Prostate gland (tissue), 2 donors: ENCODE measurements at regions of chr11 and their contacts with region 1.

Region 1: DNA sequence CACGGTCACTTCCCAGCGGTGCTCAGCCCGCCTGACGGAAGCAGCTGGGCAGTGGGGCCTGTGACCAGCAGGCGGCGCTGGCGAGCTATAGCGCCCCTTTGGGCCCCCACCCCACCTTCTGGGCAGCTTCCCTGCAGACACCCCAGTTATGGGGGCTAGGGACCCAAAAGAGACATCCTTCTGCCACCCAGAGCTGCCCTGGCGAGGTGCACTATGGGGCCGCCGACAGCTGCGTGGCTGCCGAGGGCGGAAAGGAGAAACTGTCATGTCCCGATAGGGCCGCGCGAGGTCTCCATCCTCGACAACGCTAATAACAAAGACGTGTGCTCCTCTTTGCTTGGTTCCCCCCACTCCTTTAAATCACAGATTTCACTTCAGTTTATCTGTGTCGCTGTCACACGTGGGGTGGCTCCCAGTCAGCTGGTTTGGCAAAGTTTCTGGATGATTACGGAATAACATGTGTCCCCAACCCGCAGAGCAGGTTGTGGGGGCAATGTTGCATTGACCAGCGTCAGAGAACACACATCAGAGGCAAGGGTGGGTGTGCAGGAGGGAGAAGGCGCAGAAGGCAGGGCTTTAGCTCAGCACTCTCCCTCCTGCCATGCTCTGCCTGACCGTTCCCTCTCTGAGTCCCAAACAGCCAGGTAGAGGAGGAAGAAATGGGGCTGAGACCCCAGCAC is 674 bp upstream of the MYO7A start:
- DNase-seq: no peak
- H3K4me3 ChIP-seq: peak overlapping the region; percentile 11 to 21
- H3K27ac ChIP-seq: no peak overlapping the region
- H3K4me1 ChIP-seq: no peaks in the 10 kb centered on the region
- H3K27me3 ChIP-seq: no peaks in the 10 kb centered on the region
- CTCF ChIP-seq: peak; percentile 78 to 98 (median 92)
- POLR2A ChIP-seq: no peak

Region 2: DNA sequence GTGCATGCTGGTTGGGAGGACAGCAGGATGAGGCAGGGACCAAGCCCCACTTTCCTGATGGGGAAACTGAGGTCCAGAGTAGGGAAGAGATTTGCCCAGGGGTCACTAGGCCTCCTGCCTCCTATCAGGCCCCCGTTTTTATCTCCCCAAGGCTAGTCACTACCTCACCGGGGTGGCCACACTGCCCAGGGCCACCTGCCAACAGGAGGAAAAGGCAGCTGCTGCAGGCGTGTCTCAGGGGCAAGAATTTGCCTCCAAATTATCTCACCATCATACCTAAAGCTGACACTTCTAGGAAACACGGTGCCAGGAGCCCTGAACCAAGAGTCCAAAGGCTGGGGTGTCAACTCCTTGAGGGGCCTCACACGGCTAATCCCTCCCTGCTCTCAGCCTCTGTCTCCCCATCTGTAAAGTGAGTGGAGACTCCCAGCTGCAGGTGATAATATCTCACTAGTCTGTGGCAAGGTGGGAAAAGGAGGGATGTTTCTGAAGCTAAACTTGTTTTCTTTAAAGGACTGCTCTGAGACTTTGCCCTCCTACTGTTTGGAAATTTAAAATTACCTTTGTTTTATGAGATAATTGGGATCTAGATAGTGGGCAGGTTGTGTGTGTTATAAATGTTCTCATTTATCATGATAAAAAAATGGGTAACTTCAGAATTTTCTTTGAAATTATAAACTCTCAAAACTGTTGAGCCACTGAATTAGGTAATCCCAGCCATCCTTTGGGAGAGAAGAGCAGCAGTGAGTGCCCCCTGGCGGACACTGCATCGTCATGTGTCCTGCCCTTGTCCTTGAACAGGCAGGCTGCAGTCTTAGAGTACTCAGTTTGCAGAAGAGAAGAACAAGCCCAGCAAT is 60.6 kb after region 1 on chr11:
- intact Hi-C with region 1: loop called (anchors 5 kb)
- DNase-seq: peak; percentile 72
- H3K4me3 ChIP-seq: no peak overlapping the region
- H3K27ac ChIP-seq: no peak overlapping the region
- H3K4me1 ChIP-seq: no peaks in the 10 kb centered on the region
- H3K27me3 ChIP-seq: no peaks in the 10 kb centered on the region
- CTCF ChIP-seq: peak; percentile 41 to 84 (median 76)
- POLR2A ChIP-seq: no peak

Region 3: GRCh38 chr11:77557554-77557953 is 430.2 kb after region 1 on chr11:
- intact Hi-C with region 1: loop called (anchors 5 kb)
- DNase-seq: no peak
- H3K4me3 ChIP-seq: no peak overlapping the region
- H3K27ac ChIP-seq: no peak overlapping the region
- H3K4me1 ChIP-seq: no peaks in the 10 kb centered on the region
- H3K27me3 ChIP-seq: no peaks in the 10 kb centered on the region
- CTCF ChIP-seq: peak in 1 of 4 experiments; percentile 20
- POLR2A ChIP-seq: no peak

Region 4: DNA sequence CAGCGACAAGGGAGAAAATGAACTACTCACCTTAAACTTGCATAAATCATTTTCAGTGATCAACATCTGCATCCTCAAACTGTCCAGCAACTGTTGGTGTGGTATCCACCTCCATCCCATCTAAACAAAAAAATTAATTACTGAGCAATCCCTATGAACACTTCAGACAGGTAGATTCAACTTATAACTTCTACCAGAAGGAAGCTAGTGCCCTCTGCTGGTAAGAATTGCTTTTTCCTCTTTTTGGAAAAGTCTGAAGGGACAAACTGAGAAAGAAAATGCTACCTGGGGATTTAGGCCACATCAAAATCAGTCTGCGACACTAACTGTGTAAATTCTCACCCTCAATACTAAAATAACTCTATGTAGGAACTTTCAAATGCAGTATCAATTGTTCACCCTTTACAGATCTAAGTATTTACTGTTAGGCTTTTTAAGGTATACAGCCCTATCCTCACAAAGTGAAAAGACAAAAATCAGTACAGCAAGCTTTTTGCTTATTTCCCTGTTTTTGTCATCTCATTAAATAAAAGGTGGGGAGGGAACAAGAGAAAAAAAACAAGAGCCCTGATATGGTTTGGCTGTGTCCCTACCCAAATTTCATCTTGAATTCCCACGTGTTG is 492.3 kb after region 1 on chr11:
- intact Hi-C with region 1: loop called (anchors 5 kb)
- DNase-seq: peak; percentile 49
- H3K4me3 ChIP-seq: no peak overlapping the region
- H3K27ac ChIP-seq: no peak overlapping the region
- H3K4me1 ChIP-seq: no peaks in the 10 kb centered on the region
- H3K27me3 ChIP-seq: no peaks in the 10 kb centered on the region
- CTCF ChIP-seq: peak; percentile 49 to 74 (median 68)
- POLR2A ChIP-seq: no peak